IMR-90 (cell line): ENCODE measurements at regions of chr10 and their contacts with region 1.

Region 1: DNA sequence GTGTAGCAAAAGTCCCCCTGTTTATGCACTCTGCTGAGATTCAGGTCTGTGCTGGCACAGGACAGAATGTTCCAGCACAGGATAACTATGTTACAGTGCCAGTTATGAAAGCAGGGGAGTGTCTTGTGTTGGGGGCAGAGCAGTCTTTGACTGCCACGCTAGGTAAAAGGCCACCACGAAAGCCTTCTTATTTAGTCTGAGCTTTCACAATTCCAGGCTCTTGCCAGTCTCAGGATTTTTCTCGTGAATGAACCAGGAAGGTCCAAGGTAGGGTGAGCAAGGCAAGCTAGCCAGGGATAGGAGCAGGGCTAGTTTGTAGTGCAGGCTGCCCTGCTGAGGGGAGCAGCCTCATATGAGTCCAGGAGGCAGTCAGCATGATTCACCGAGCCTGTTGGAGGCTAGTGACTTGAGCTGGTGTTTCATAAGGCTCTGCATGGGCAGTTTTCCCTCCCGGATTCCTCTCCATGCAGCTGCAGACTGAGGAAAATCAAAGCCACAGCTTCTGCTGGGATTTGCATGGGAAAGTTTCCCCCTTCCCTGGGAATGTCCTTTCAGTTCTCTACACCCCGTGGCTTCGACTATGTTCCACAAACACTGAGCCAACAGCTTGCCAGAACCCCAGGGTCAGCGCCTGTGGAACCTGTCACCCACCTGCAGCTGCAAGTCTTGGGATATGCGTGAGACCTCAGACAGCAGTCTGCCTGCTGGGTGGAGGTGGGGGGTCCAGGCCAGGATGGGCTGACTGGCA is 112.3 kb downstream of the JCAD start:
- DNase-seq: peak; percentile 94
- ATAC-seq: peak; percentile 76
- H3K4me3 ChIP-seq: no peak overlapping the region
- H3K27ac ChIP-seq: 0 out of 2 replicates have a peak overlapping the region, but pooled peaks have one; percentile 9
- H3K4me1 ChIP-seq: peaks cover 29% of the 10 kb centered on the region
- H3K27me3 ChIP-seq: no peaks in the 10 kb centered on the region
- CTCF ChIP-seq: no peak
- POLR2A ChIP-seq: no peak
- RAD21 ChIP-seq: peak; percentile 24; the same call in 1 of the 2 replicates

Region 2: GRCh38 chr10:29811751-29812449 is 135.2 kb before region 1 on chr10:
- CTCF ChIA-PET with region 1: no interaction called
- POLR2A ChIA-PET with region 1: no interaction called
- dilution Hi-C with region 1: no loop called
- in situ Hi-C with region 1: no loop called
- intact Hi-C with region 1: loop called (anchors 5 kb)
- DNase-seq: peak; percentile 98
- ATAC-seq: peak; percentile 85
- H3K4me3 ChIP-seq: no peak overlapping the region
- H3K27ac ChIP-seq: peak overlapping the region; percentile 78
- H3K4me1 ChIP-seq: peaks cover 23% of the 10 kb centered on the region
- H3K27me3 ChIP-seq: 0 out of 2 replicates have a peak, but pooled peaks cover 2% of the 10 kb centered on the region
- CTCF ChIP-seq: no peak
- POLR2A ChIP-seq: 0 out of 2 replicates have a peak, but pooled peaks have one; percentile 17
- RAD21 ChIP-seq: no peak